ENCODE measurements at regions of chr9 and their contacts with region 1.

Region 1: DNA sequence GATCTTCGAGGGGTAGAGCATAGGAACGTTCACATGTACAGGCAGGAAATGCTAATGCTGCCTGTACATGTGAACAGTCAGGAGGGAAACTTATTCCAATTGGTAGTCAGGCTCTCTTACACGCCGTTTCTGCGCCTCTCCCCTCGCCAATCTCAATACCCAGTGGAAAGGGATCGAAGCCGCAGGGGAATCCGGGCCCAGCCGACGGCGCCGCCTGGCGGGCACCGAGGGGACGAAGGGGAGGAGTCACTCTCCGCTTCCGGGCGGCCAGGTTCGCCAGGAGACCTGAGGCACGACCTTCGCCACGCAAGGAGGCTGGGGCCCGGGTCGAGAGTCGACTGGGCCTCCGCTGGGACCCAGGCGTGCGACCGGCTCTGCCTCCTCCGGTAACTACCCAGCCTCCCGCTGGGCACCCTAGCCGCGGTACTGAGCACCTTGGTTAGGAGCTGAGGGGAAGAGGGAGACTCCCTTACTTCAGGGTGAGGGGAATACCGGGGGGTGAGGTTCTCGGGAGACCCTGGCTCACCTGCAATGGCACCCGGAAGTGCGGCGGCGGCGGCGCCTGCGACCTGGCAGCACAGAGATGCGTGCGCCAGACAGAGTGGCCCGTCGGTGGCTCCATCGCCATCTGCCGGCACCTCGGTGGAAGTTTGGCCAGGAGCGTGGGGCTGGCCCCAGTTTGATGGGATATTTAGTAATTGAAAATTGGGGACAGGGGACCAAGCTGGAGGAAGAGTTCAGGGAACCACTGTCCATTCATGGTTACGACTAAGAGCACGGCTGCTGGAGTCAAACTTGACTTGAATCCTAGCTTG is at the start of gene PIGO:
- DNase-seq: peak; percentile 90 to 92 (median 92)
- H3K4me3 ChIP-seq: peak within 1 kb of the TSS; percentile 87 to 98 (median 94)
- H3K27ac ChIP-seq: peak within 1 kb of the TSS; percentile 98
- H3K4me1 ChIP-seq: peaks cover 0 to 15% (median 14%) of the 10 kb centered on the region in 4 experiments
- H3K27me3 ChIP-seq: no peaks in the 10 kb centered on the region

Region 2: DNA sequence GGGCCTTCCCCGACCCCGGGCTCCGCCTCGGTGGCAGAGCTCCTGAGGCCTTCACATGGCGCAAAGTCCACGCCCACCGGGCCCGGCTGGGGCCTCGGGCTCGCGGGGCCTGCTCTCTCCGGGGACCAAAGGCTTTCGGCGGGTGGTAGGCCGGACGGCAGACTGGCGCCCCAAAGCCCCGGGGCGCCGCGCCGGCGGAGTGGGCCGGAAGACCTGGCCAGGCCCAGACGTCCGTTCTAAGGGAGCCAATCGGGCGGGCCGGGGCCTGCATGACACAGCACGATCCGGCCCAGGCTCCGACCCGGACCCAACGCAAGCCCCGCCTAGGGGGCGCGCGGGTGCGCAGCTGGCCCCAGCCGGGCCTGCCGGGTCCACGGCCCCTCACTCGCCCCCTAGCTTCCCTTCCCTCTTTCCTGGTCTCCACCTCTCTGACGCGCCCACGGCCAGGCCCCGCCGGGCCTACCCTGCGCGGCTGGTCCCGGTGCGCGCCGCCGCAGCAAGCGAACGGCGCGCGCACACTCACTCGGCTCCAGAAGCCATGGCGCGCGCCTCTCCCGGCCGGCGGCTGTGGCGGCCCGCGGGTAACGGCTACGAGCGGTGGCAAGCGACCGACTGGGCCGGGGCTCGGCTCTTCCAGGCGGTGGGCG is 24.3 kb before region 1 on chr9:
- CTCF ChIA-PET with region 1: interaction called, 87 read pairs
- POLR2A ChIA-PET with region 1: interaction called, 3 read pairs
- DNase-seq: peak; percentile 93 to 96 (median 95)
- H3K4me3 ChIP-seq: peak overlapping the region; percentile 83 to 98 (median 92)
- H3K27ac ChIP-seq: peak overlapping the region; percentile 98 to 99
- H3K4me1 ChIP-seq: peaks cover 20 to 38% (median 25%) of the 10 kb centered on the region in 4 experiments
- H3K27me3 ChIP-seq: no peaks in the 10 kb centered on the region

Region 3: GRCh38 chr9:35079426-35080341 is 16.6 kb before region 1 on chr9 and contains the start of gene FANCG:
- CTCF ChIA-PET with region 1: interaction called, 87 read pairs
- POLR2A ChIA-PET with region 1: interaction called, 4 read pairs
- DNase-seq: peak; percentile 88 to 94 (median 92)
- H3K4me3 ChIP-seq: peak within 1 kb of the TSS; percentile 72 to 86 (median 84)
- H3K27ac ChIP-seq: peak within 1 kb of the TSS in 1 of 2 experiments; percentile 67
- H3K4me1 ChIP-seq: peaks cover 2 to 22% (median 19%) of the 10 kb centered on the region in 4 experiments
- H3K27me3 ChIP-seq: no peaks in the 10 kb centered on the region

Region 4: DNA sequence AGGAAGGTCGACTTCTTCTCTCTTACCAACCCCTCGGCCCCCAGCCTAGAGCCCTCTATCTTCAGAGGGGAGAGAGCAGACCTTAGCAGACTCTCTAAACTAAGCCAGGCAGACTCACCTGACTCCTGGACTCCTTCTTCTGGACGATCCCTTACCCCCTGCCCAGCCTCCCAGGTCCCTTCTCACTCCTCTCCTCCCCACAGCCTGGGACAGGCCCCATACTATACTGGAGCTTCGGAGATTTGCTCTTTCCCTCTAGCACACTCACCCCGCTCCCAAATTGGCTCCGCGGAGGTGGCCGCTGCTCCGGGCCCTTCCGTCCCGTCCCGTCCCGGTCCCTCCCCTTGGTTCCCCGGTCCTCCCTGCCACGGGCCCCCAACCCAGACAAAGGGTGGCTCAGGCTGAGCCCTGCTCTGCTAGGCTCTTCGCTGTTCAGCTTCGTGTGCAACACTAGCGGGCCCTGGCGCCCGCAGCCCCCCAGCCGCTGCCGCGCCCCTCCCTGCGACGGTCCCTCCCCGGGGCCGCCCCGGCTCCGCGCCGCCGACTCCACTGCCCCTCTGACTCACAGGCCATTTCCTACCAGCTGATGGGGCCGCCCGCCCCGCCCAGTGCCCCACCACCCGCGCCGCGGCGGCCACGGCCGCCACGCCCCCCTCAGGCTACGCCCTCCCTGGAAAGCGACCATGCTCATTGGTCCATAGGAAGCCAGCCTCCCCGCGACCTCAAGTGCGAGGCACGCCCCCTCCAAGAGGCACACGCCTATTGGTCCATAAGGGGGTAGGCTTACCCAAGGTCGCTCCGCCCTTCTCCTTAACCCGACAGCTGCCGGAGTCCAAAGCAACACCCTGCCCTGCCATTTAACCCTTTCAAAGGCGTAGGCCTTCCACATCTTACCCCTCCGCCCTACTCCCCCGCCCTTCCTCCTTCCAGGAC is 15.0 kb after region 1 on chr9:
- CTCF ChIA-PET with region 1: interaction called, 65 read pairs
- POLR2A ChIA-PET with region 1: interaction called, 3 read pairs
- DNase-seq: peak; percentile 97 to 99 (median 99)
- H3K4me3 ChIP-seq: peak overlapping the region; percentile 64 to 90 (median 77)
- H3K27ac ChIP-seq: peak overlapping the region; percentile 64 to 89
- H3K4me1 ChIP-seq: peaks cover 30 to 85% (median 77%) of the 10 kb centered on the region in 4 experiments
- H3K27me3 ChIP-seq: no peaks in the 10 kb centered on the region

Measured in common myeloid progenitor, CD34-positive (primary cell).